Activated naive CD4-positive, alpha-beta T cell treated with anti-CD3 and anti-CD28 coated beads for 36 hours (primary cell): ENCODE measurements at regions of chr12 and their contacts with region 1.

Region 1: GRCh38 chr12:25151476-25151875 is 43.5 kb downstream of the DNAI7 start:
- DNase-seq: no peak
- H3K4me3 Mint-ChIP-seq: no peak overlapping the region
- H3K27ac Mint-ChIP-seq: no peak overlapping the region
- H3K4me1 Mint-ChIP-seq: peaks cover 6% of the 10 kb centered on the region
- H3K27me3 Mint-ChIP-seq: no peaks in the 10 kb centered on the region

Region 2: DNA sequence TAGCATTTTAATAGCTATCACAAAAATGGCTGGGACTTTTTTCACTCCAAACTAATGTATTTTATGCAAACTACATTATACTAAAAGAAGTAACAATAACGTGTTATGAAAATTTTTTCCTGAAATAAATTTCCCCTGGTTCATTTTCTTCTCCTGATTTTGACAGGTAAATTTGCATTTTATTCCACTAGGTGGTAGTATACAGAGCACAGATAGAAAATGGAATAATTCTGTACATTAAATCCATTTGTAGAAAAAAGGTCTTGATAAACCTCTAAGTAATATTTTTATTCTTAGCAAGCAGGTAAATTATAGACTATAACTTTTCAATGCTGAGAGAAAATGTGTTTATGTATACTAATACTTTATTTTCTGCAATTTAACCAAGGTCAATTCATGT is 299.1 kb before region 1 on chr12:
- CTCF ChIA-PET with region 1: interaction called, 10 read pairs
- intact Hi-C with region 1: loop called (anchors 1 kb)
- DNase-seq: no peak
- H3K4me3 Mint-ChIP-seq: no peak overlapping the region
- H3K27ac Mint-ChIP-seq: no peak overlapping the region
- H3K4me1 Mint-ChIP-seq: peaks cover 17% of the 10 kb centered on the region
- H3K27me3 Mint-ChIP-seq: peaks cover 20% of the 10 kb centered on the region

Region 3: DNA sequence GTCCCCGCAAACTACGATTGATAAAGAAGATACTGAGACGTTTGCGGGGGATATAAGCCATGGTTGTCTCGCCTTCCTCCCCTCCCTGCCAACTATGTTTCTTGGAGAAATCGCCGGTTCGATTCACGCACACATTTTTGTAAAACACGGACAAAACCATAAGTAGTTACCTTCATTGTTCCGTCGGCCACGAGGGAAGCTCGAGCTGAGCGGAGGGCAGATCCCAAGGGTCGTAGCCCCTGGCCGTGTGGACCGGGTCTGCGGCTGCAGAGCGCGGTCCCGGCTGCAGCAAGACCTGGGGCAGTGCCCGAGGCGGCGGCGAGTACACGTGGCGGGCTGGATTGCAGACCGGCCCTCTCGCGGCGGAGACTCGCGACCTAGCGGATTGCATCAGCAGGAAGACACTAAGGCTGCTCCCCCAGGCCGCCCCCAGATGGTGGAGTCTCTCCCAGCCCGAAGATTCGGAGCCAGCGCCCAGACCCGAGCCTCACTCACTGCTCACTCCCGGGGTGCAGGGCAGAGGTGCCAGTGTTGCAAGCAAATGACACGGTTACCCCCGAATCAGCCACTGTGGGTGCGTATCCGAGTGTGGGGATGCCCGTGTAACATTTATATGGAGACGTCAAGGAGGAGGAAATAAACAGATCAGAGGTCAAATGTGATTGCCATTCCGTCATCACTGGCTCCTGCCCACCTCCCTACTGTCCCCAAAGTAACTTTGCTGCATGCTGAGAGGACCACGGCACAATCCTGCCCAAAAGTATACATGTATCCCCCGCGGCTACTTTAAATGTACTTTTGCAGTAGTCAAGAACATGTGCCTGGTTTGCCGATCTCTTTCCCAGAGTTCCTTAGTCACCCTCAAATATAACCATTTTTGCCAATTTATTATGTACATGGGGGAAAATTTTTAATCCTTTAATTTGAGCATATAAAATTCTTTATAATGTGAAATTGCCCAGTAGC is 202.4 kb before region 1 on chr12 and contains the start of gene BCAT1:
- CTCF ChIA-PET with region 1: no interaction called
- intact Hi-C with region 1: no loop called
- DNase-seq: peak; percentile 35
- H3K4me3 Mint-ChIP-seq: peak within 1 kb of the TSS; percentile 81
- H3K27ac Mint-ChIP-seq: peak within 1 kb of the TSS; percentile 81
- H3K4me1 Mint-ChIP-seq: peaks cover 59% of the 10 kb centered on the region
- H3K27me3 Mint-ChIP-seq: peaks cover 62% of the 10 kb centered on the region
- total RNA-seq, gene BCAT1: 16.4 to 16.7 TPM

Region 4: GRCh38 chr12:24960222-24960855 is 191.1 kb before region 1 on chr12:
- CTCF ChIA-PET with region 1: interaction called, 3 read pairs
- intact Hi-C with region 1: loop called (anchors 1 kb)
- DNase-seq: peak; percentile 76
- H3K4me3 Mint-ChIP-seq: no peak overlapping the region
- H3K27ac Mint-ChIP-seq: no peak overlapping the region
- H3K4me1 Mint-ChIP-seq: peaks cover 23% of the 10 kb centered on the region
- H3K27me3 Mint-ChIP-seq: peaks cover 17% of the 10 kb centered on the region

Region 5: GRCh38 chr12:24997970-24998582 is 153.4 kb before region 1 on chr12:
- CTCF ChIA-PET with region 1: interaction called, 6 read pairs
- intact Hi-C with region 1: loop called (anchors 1 kb)
- DNase-seq: peak; percentile 20
- H3K4me3 Mint-ChIP-seq: no peak overlapping the region
- H3K27ac Mint-ChIP-seq: peak overlapping the region; percentile 75
- H3K4me1 Mint-ChIP-seq: peaks cover 36% of the 10 kb centered on the region
- H3K27me3 Mint-ChIP-seq: no peaks in the 10 kb centered on the region

Region 6: DNA sequence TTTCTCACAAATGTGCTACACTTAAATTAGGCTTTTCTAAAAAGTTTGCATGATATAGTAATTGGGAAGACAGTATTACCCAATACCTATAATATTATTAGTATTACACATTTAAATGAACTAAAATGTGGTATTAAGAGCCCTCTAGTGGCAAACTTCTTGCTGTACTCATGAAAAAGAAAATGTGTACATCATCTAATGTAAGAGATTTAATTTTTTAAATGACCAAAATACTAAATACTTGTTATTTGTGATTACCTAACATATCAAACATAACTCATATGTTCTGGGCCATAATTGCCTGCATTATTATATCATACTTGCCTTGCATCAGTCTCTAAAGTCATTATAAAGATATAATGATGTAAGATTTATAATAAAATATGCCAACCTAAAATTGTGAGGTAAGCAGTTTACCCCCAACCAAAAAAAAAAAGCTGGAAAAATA is 20.7 kb before region 1 on chr12:
- CTCF ChIA-PET with region 1: interaction called, 8 read pairs
- intact Hi-C with region 1: loop called (anchors 2 kb)
- DNase-seq: no peak
- H3K4me3 Mint-ChIP-seq: no peak overlapping the region
- H3K27ac Mint-ChIP-seq: no peak overlapping the region
- H3K4me1 Mint-ChIP-seq: no peaks in the 10 kb centered on the region
- H3K27me3 Mint-ChIP-seq: peaks cover under 1% of the 10 kb centered on the region

Region 7: DNA sequence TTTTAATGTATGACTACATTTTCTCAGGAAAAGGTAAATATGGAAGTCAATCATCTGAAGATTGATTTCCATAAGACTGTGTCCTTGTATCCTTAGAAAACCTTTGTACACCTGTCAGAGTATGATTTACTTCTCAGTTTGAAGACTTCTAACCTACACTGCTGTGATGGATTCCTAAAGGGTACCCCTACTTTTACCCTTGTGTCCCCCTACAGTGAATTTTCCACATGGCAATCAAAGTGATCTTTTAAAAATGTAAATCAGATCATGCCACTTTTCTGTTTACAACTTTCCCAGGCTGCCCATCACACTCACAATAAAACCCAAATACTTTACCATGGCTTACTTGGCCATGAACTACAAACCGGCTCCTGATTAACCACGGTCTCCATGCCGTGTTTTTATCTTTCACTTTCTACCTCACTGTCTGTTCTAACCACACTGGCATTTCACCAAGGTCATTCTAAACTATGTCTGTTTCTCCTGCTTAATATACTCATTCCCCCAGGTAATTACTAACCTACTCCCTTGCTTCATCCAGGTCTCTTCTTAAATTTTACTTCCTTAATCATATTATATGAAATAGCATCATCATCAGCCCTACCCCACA is 35.4 kb after region 1 on chr12:
- CTCF ChIA-PET with region 1: interaction called, 5 read pairs
- intact Hi-C with region 1: loop called (anchors 1 kb)
- DNase-seq: peak; percentile 37
- H3K4me3 Mint-ChIP-seq: peak overlapping the region; percentile 73
- H3K27ac Mint-ChIP-seq: peak overlapping the region; percentile 77
- H3K4me1 Mint-ChIP-seq: peaks cover 18% of the 10 kb centered on the region
- H3K27me3 Mint-ChIP-seq: no peaks in the 10 kb centered on the region

Region 8: GRCh38 chr12:25386831-25387731 is 235.6 kb after region 1 on chr12:
- CTCF ChIA-PET with region 1: no interaction called
- intact Hi-C with region 1: loop called (anchors 1 kb)
- DNase-seq: peak; percentile 87
- H3K4me3 Mint-ChIP-seq: peak overlapping the region; percentile 99
- H3K27ac Mint-ChIP-seq: peak overlapping the region; percentile 100
- H3K4me1 Mint-ChIP-seq: peaks cover 56% of the 10 kb centered on the region
- H3K27me3 Mint-ChIP-seq: no peaks in the 10 kb centered on the region